Activated CD4-positive, alpha-beta memory T cell treated with anti-CD3 and anti-CD28 coated beads for 36 hours (primary cell): ENCODE measurements at regions of chr16 and their contacts with region 1.

Region 1: GRCh38 chr16:30183233-30184095 is at the start of gene CORO1A:
- DNase-seq: peak; percentile 92
- H3K4me3 Mint-ChIP-seq: peak within 1 kb of the TSS; percentile 100
- H3K27ac Mint-ChIP-seq: peak within 1 kb of the TSS; percentile 100
- H3K4me1 Mint-ChIP-seq: peaks cover 24% of the 10 kb centered on the region
- H3K27me3 Mint-ChIP-seq: no peaks in the 10 kb centered on the region
- total RNA-seq, gene CORO1A: 1,027 to 1,051 TPM

Region 2: GRCh38 chr16:29877266-29877961 is 306.1 kb before region 1 on chr16:
- CTCF ChIA-PET with region 1: no interaction called
- POLR2A ChIA-PET with region 1: no interaction called
- intact Hi-C with region 1: no loop called
- DNase-seq: peak; percentile 82
- H3K4me3 Mint-ChIP-seq: peak overlapping the region; percentile 57
- H3K27ac Mint-ChIP-seq: no peak overlapping the region
- H3K4me1 Mint-ChIP-seq: peaks cover 16% of the 10 kb centered on the region
- H3K27me3 Mint-ChIP-seq: peaks cover 19% of the 10 kb centered on the region

Region 3: DNA sequence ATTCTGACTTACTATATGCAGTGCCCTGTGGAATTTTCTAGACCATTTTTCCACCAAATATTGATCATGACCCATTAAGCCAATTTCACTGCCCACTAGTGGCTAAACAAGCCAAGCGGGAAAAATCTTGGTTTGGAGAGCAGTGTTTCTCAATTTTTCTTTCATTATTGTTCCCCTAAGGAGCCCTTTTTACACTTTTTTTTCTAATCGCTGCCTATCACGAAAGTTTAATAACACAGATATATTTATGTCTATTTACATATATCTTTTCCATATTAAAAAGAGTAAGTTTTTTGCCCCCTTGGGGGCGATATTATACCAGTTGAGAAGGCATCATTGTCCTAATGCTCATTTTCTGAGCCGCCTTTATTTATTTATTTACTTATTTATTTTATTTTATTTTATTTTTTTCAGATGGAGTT is 141.6 kb before region 1 on chr16:
- CTCF ChIA-PET with region 1: no interaction called
- POLR2A ChIA-PET with region 1: no interaction called
- intact Hi-C with region 1: no loop called
- DNase-seq: no peak
- H3K4me3 Mint-ChIP-seq: no peak overlapping the region
- H3K27ac Mint-ChIP-seq: no peak overlapping the region
- H3K4me1 Mint-ChIP-seq: peaks cover 8% of the 10 kb centered on the region
- H3K27me3 Mint-ChIP-seq: peaks cover 3% of the 10 kb centered on the region

Region 4: GRCh38 chr16:30112197-30113030 is 71.0 kb before region 1 on chr16:
- CTCF ChIA-PET with region 1: interaction called, 11 read pairs
- POLR2A ChIA-PET with region 1: interaction called, 9 read pairs
- intact Hi-C with region 1: no loop called
- DNase-seq: peak; percentile 79
- H3K4me3 Mint-ChIP-seq: no peak overlapping the region
- H3K27ac Mint-ChIP-seq: no peak overlapping the region
- H3K4me1 Mint-ChIP-seq: peaks cover 16% of the 10 kb centered on the region
- H3K27me3 Mint-ChIP-seq: no peaks in the 10 kb centered on the region

Region 5: GRCh38 chr16:30142672-30143346 is 40.7 kb before region 1 on chr16:
- CTCF ChIA-PET with region 1: interaction called, 5 read pairs
- POLR2A ChIA-PET with region 1: no interaction called
- intact Hi-C with region 1: loop called (anchors 1 kb)
- DNase-seq: peak; percentile 33
- H3K4me3 Mint-ChIP-seq: no peak overlapping the region
- H3K27ac Mint-ChIP-seq: peak overlapping the region; percentile 33
- H3K4me1 Mint-ChIP-seq: peaks cover 15% of the 10 kb centered on the region
- H3K27me3 Mint-ChIP-seq: no peaks in the 10 kb centered on the region

Region 6: DNA sequence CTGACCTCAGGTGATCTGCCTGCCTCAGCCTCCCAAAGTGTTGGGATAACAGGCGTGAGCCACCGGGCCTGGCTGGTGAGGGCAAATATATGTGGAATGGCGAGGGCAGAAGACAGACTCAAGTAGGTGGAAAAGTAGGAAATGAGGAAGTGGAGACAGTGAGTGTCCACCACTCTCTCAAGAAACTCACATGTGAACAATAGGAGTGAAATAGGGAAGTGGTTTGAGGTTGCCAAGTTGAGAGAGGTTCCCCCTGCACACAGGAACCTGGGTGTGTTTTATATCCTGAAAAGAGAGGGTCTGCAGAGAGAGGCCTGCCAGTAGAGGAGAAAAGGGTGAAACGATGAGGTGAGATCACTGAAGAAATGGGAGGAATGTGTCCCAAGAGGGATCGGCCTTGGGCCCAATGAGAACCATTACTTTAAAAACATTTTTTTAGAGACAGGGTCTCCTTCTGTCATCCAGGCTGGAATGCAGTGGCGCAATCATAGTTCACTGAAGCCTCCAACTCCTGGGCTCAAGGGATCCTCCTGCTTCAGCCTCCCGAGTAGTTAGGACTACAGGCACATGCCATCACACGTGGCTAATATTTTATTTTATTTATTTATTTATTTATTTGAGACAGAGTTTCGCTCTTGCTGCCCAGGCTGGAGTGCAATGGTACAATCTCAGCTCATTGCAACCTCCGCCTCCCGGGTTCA is 17.1 kb before region 1 on chr16:
- CTCF ChIA-PET with region 1: no interaction called
- POLR2A ChIA-PET with region 1: no interaction called
- intact Hi-C with region 1: no loop called
- DNase-seq: no peak
- H3K4me3 Mint-ChIP-seq: no peak overlapping the region
- H3K27ac Mint-ChIP-seq: no peak overlapping the region
- H3K4me1 Mint-ChIP-seq: peaks cover 20% of the 10 kb centered on the region
- H3K27me3 Mint-ChIP-seq: no peaks in the 10 kb centered on the region

Region 7: GRCh38 chr16:30382111-30382881 is 198.8 kb after region 1 on chr16 and contains the start of gene SEPTIN1:
- CTCF ChIA-PET with region 1: no interaction called
- POLR2A ChIA-PET with region 1: no interaction called
- intact Hi-C with region 1: no loop called
- DNase-seq: peak; percentile 90
- H3K4me3 Mint-ChIP-seq: peak within 1 kb of the TSS; percentile 95
- H3K27ac Mint-ChIP-seq: peak within 1 kb of the TSS; percentile 95
- H3K4me1 Mint-ChIP-seq: peaks cover 44% of the 10 kb centered on the region
- H3K27me3 Mint-ChIP-seq: no peaks in the 10 kb centered on the region
- total RNA-seq, gene SEPTIN1: 199 to 202 TPM